Heart left ventricle (tissue), 16 donors: ENCODE measurements at regions of chr20 and their contacts with region 1.

Region 1: GRCh38 chr20:47379433-47380150 is 23.1 kb upstream of the ZMYND8 start:
- DNase-seq: no peak
- ATAC-seq: no peak
- H3K4me3 ChIP-seq: no peak overlapping the region
- H3K27ac ChIP-seq: no peak overlapping the region
- H3K4me1 ChIP-seq: peaks cover 0 to 20% (median 11%) of the 10 kb centered on the region in 12 donors
- H3K27me3 ChIP-seq: no peaks in the 10 kb centered on the region
- CTCF ChIP-seq: no peak
- POLR2A ChIP-seq: no peak

Region 2: DNA sequence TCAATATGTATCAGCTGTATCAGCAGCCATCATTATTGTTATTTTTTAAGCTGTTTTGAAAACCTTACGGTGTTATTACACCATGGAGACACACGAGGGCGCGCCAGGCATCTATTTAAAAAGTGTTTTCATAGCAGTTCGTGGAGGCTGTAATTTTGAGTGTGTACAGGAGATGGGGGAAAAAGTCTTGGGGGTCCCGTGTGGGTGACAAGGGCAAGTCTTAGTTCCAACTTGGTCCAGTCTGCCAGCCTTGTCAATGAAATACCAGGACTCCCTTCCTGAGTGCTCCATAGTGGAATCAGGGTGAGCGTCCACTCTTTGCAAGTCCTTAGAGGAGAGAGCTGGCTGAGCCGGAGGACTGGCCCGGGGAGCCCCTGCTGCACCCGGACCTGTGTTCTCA is 626.9 kb before region 1 on chr20:
- intact Hi-C with region 1: loop called in 5 of 10 experiments (anchors 5 to 10 kb)
- DNase-seq: peak in 3 of 5 donors; percentile 17 to 44 (median 34)
- ATAC-seq: peak in 1 of 4 donors; percentile 45
- H3K4me3 ChIP-seq: peak overlapping the region in 2 of 12 donors; percentile 18 to 20
- H3K27ac ChIP-seq: no peak overlapping the region
- H3K4me1 ChIP-seq: peaks cover 0 to 4% (median 0%) of the 10 kb centered on the region in 12 donors
- H3K27me3 ChIP-seq: peaks cover 0 to 10% (median 0%) of the 10 kb centered on the region in 9 donors
- CTCF ChIP-seq: peak; percentile 59 to 83 (median 71)
- POLR2A ChIP-seq: no peak

Region 3: DNA sequence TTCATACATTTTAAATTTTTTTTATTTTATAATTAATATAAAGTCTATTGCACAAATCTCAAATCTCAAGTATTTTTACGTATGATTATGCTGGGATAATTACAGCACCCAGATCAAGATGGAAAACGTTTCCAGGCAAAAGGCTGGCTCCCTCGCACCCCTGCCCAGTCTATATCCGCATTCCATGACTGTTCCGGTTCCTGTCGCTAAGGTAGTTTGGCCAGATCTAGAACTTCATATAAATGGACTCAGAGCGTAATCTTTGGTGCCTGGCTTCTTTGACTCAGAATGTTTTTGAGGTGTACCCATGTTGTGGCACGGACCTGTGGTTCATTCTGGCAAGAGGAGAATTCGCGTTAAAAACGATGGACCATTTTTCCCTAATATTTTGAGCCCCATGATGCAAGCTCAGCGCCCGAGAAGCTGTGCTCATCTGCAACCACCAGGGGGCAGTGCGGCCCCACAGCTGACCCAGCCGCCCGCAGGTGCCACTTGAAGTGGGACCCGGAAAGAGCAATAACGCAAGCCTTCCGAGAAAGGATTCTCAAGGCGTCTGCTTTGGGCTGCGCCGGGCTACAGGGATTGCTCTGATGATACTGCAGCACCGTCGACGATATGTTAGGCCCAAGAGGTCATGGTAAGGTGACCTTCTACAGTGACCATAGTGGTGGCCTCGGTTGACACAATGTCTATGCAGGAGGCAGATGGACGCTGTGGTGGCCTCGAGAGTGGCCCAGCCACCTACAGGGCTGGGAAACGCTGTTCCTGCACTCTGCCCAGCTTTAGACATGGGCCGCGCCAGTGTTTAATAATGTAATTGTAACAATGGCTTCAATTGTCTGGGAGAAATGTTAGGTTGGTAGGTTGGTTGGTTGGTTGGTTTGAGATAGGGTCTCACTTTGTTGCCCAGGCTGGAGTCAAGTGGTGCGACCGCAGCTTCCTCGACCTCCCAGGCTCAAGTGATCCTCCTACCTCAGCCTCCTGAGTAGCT is 183.2 kb before region 1 on chr20:
- intact Hi-C with region 1: loop called (anchors 1 to 5 kb)
- DNase-seq: peak; percentile 60 to 84 (median 66)
- ATAC-seq: peak; percentile 45 to 86 (median 83)
- H3K4me3 ChIP-seq: peak overlapping the region in 1 of 12 donors; percentile 5
- H3K27ac ChIP-seq: peak overlapping the region in 1 of 12 donors; percentile 17
- H3K4me1 ChIP-seq: peaks cover 0 to 19% (median 7%) of the 10 kb centered on the region in 12 donors
- H3K27me3 ChIP-seq: no peaks in the 10 kb centered on the region
- CTCF ChIP-seq: peak; percentile 91 to 98 (median 95)
- POLR2A ChIP-seq: no peak

Region 4: GRCh38 chr20:47293631-47294030 is 86.0 kb before region 1 on chr20:
- intact Hi-C with region 1: no loop called
- DNase-seq: no peak
- ATAC-seq: no peak
- H3K4me3 ChIP-seq: no peak overlapping the region
- H3K27ac ChIP-seq: peak overlapping the region in 2 of 12 donors; percentile 30 to 34
- H3K4me1 ChIP-seq: peaks cover 0 to 18% (median 6%) of the 10 kb centered on the region in 12 donors
- H3K27me3 ChIP-seq: no peaks in the 10 kb centered on the region
- CTCF ChIP-seq: no peak
- POLR2A ChIP-seq: no peak

Region 5: GRCh38 chr20:47304287-47304686 is 75.3 kb before region 1 on chr20:
- intact Hi-C with region 1: loop called in 1 of 10 experiments (anchors 5 kb)
- DNase-seq: no peak
- ATAC-seq: peak; percentile 10 to 37 (median 24)
- H3K4me3 ChIP-seq: no peak overlapping the region
- H3K27ac ChIP-seq: peak overlapping the region in 10 of 12 donors; percentile 18 to 77 (median 46)
- H3K4me1 ChIP-seq: peaks cover 3 to 44% (median 22%) of the 10 kb centered on the region in 12 donors
- H3K27me3 ChIP-seq: no peaks in the 10 kb centered on the region
- CTCF ChIP-seq: peak in 1 of 12 donors; percentile 18
- POLR2A ChIP-seq: no peak

Region 6: DNA sequence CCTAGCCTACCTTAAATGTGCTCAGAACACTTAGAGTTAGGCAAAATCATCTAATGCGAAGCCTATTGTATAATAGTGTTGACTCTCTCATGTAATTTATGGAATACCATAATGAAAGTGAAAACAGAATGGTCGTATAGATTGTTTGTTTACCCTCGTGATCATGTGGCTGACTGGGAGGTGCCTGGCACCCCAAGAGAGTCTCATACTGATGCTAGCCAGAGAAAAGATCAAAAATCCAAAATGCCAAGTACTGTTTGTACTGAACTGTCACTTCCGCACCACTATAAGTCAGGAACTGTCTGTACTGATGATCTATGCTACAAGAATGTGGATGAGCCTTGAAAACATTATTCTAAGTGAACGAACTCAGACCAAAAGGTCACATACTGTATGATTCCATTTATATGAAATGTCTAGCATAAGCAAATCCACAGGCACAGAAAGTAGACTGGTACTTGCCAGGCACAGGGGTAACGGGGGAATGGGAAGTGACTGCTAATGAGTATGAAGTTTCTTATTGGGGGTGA is 45.5 kb before region 1 on chr20:
- intact Hi-C with region 1: no loop called
- DNase-seq: no peak
- ATAC-seq: peak; percentile 71 to 81 (median 76)
- H3K4me3 ChIP-seq: peak overlapping the region in 7 of 12 donors; percentile 8 to 39 (median 30)
- H3K27ac ChIP-seq: peak overlapping the region; percentile 39 to 88 (median 78)
- H3K4me1 ChIP-seq: peaks cover 4 to 93% (median 57%) of the 10 kb centered on the region in 12 donors
- H3K27me3 ChIP-seq: no peaks in the 10 kb centered on the region
- CTCF ChIP-seq: no peak
- POLR2A ChIP-seq: peak in 1 of 2 donors; percentile 39